Aorta (tissue), 5 donors: ENCODE measurements at regions of chr12 and their contacts with region 1.

Region 1: DNA sequence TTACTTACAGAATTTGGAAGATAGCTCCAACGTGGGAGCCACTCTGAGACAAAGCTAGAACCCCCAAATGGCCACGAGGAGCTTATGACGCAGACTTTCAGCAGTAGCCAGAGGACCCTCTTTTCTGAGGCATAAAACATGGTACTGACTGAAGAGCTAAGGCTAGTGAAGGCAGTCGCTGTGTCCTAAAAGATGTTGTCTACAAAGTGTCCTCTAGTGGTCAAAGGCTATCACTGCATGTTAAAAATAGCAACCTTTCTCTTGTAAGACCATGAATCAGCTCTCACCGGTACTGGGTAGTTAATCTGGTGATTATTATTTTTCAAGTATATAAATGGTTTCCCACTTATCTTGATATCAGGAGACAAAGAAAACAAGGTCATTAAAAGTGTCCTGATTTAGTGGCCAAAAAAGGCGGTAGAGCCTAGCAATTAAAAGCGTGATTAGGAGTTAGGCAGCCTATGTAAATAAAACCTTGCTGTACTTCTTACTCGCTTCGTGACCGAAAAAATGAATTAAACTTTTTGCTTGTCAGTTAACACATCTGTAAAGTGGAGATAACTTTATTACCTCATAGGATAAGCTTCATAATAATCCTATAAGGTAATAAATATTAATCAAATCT is 47.0 kb upstream of the LGR5 start:
- DNase-seq: no peak
- ATAC-seq: peak; percentile 81
- H3K4me3 ChIP-seq: no peak overlapping the region
- H3K27ac ChIP-seq: no peak overlapping the region
- H3K4me1 ChIP-seq: peaks cover 0 to 3% of the 10 kb centered on the region in 2 donors
- H3K27me3 ChIP-seq: no peaks in the 10 kb centered on the region

Region 2: GRCh38 chr12:71216725-71217579 is 175.7 kb before region 1 on chr12:
- intact Hi-C with region 1: loop called (anchors 5 kb)
- DNase-seq: no peak
- ATAC-seq: no peak
- H3K4me3 ChIP-seq: no peak overlapping the region
- H3K27ac ChIP-seq: no peak overlapping the region
- H3K4me1 ChIP-seq: no peaks in the 10 kb centered on the region
- H3K27me3 ChIP-seq: no peaks in the 10 kb centered on the region